ENCODE measurements at regions of chr19 and their contacts with region 1.

Region 1: GRCh38 chr19:2750808-2751443 is 11.1 kb upstream of the SLC39A3 start:
- DNase-seq: no peak
- H3K4me3 ChIP-seq: no peak overlapping the region
- H3K27ac ChIP-seq: no peak overlapping the region
- H3K4me1 ChIP-seq: peaks cover 15% of the 10 kb centered on the region
- CTCF ChIP-seq: no peak

Region 2: DNA sequence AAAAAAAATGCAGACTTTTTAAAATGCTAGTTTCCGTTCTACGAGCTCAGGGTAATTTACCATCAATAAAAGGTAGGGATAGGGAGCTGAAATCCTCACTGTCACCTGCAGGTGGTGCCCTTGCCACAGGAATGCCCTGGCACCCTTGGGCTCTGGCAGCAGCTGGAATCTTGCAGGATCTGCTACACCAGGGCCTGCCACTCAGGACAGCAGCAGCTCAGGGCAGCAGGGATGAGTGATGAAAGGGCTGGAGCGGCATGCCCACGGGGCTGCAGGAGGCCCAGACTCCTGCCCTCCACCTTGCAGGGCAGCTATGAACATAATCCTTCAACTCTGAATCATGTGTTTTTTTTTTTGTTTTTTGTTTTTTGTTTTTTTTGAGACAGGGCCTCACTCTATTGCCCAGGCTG is 102.4 kb before region 1 on chr19:
- CTCF ChIA-PET with region 1: interaction called, 3 read pairs
- POLR2A ChIA-PET with region 1: interaction called, 4 read pairs
- intact Hi-C with region 1: loop called (anchors 1 kb)
- DNase-seq: peak; percentile 84
- H3K4me3 ChIP-seq: no peak overlapping the region
- H3K27ac ChIP-seq: no peak overlapping the region
- H3K4me1 ChIP-seq: peaks cover 23% of the 10 kb centered on the region
- CTCF ChIP-seq: peak; percentile 98

Region 3: GRCh38 chr19:2663920-2664571 is 86.9 kb before region 1 on chr19:
- CTCF ChIA-PET with region 1: no interaction called
- POLR2A ChIA-PET with region 1: no interaction called
- intact Hi-C with region 1: loop called (anchors 2 kb)
- DNase-seq: peak; percentile 75
- H3K4me3 ChIP-seq: no peak overlapping the region
- H3K27ac ChIP-seq: peak overlapping the region; percentile 31
- H3K4me1 ChIP-seq: peaks cover 34% of the 10 kb centered on the region
- CTCF ChIP-seq: peak; percentile 72

Region 4: DNA sequence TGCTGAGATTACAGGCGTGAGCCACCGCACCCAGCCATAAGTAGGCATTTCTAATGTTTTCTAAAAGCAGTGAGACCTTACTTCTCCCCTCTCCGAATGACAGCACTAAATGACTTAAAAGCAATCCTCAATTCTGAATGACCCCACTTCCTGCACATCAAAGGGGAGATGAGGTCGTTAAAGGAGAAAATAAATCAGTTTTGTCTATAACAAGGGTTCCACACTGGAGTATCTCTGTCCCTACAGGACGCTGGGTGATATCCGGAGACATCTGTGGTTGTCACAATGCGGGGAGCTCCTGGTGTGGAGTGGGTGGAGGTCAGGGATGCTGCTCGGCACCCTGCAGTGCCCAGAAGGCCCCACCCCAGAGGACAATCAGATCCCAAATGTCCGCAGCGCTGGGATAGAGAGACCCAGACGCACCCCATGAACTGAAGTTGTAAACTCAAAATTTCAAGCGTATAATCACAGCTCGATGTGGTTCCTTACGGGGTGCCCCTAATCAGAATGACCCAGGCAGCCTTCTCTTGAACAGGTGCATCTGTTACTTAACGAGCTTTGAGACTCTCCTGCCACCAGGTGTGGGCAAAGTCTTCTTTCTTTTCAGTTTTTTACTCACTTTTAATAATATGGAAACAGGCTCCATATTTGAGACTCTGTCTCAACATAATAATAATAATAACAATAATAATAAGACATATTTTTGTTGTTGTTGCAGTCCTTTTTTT is 51.3 kb before region 1 on chr19:
- CTCF ChIA-PET with region 1: no interaction called
- POLR2A ChIA-PET with region 1: no interaction called
- intact Hi-C with region 1: loop called (anchors 2 kb)
- DNase-seq: peak; percentile 61
- H3K4me3 ChIP-seq: peak overlapping the region; percentile 58
- H3K27ac ChIP-seq: peak overlapping the region; percentile 90
- H3K4me1 ChIP-seq: peaks cover 77% of the 10 kb centered on the region
- CTCF ChIP-seq: no peak

Measured in OCI-LY7 (cell line).